ENCODE measurements at regions of chr6 and their contacts with region 1.

Region 1: DNA sequence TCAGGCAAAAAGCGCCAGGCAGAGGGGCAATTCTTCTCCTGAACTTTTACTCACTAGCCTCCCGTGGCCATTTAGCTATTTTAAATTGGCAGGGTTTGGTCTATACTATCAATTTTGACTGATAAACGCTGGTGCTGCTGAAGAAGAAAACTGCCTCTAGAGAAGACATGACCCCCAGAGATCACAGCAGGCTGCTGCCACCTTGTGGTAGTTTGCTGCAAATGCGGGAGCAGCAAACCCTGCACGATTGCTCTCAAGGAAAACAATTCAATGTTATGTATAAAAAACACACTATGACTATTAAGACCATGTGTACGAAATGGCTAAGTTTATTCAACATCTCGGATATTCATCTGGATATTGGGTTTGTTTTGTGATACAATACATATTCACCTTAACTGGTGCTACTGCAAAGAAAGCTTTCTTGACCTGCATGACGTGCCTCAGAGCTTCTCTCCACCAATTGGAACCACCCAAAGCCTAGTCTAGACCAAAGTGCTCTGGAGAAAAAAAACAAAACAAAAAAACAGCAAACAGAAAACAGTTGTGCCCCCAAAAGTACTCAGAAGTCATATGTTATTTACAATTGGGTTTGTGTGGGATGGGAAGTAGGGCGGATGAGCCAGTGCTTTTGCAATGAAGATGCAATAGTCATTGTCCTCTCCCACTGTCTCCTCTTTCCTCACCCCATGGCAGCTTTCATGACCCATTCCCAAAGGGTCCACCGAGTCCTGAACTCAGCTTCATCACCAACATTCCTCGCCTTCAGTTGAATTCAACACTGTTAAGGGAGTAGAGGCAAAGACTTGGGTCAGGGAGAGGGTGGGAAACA is 19.6 kb upstream of the IL17F start:
- DNase-seq: peak; percentile 63
- H3K4me3 Mint-ChIP-seq: no peak overlapping the region
- H3K27ac Mint-ChIP-seq: peak overlapping the region; percentile 47
- H3K4me1 Mint-ChIP-seq: peaks cover 7% of the 10 kb centered on the region
- H3K27me3 Mint-ChIP-seq: no peaks in the 10 kb centered on the region

Region 2: DNA sequence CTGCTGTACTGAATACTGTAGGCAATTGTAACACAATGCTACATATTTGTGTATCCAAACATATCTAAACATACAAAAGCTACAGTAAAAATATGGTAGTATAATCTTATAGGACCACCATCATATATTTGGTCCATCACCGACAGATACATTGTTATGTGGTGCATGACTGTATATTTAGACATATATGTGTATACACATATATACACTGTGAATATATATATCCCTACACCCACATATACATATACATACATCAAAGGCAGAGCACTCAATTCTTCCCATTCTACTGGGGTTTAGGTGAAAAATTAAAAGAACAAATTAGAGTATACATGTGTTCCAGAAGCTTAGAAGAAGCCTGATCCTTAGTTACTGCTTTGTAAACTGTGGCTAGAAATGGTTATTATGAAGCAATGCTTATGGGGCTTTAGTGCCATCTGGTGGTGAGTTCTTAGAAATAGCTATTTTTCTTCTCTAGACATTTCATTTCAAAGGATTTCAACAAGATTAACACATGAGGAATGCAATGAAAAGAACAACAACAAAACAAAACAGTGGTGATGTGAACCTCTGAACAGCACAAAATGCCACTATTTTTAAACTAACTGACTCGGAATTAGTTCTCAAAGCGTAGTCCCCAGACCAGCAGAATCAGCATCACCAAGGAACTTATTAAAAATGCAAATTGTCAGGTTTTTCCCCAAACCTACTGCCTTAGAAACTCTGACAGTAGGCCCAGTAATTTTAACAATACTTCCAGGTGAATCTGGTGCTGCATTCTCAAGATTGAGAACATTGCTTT is 214.5 kb before region 1 on chr6:
- intact Hi-C with region 1: loop called (anchors 1 kb)
- DNase-seq: no peak
- H3K4me3 Mint-ChIP-seq: no peak overlapping the region
- H3K27ac Mint-ChIP-seq: no peak overlapping the region
- H3K4me1 Mint-ChIP-seq: no peaks in the 10 kb centered on the region
- H3K27me3 Mint-ChIP-seq: peaks cover 8% of the 10 kb centered on the region

Region 3: DNA sequence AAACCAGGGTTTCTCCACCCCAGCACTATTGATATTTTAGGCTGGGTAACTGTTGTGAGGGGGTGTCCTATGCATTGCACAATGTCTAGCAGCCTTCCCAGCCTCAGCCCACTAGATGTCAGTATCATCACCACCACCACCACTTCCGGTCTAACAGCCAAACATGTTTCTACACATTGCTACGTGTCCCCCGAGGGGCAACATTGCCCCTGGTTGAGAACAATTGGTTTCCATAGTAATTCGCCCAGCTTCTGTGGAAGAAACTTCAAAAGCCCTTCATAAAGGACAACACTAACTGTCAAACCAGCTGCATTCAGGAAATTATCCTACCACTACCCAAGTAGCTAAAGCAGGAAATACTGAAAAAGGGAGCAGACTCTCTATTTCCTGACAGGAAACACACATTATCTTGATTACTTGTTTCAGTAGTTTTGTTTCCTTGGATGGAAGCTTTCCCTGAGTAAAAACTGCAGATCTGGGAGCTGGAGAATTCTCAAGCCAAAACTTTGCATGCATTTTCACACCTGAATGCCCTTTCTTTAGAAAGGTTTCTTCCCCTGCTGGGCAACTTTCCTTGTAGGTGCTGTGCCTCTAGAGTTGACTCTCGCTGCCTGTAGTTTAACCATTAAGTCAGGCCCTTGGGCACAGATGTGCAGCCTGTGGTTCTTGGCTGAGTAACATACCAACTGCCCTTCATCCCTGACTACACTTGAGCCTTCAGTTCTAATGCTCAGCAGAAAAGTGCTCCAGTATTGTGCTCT is 200.2 kb before region 1 on chr6:
- intact Hi-C with region 1: loop called (anchors 1 kb)
- DNase-seq: peak; percentile 37
- H3K4me3 Mint-ChIP-seq: no peak overlapping the region
- H3K27ac Mint-ChIP-seq: no peak overlapping the region
- H3K4me1 Mint-ChIP-seq: peaks cover 13% of the 10 kb centered on the region
- H3K27me3 Mint-ChIP-seq: peaks cover 13% of the 10 kb centered on the region

Region 4: GRCh38 chr6:52098634-52099185 is 165.2 kb before region 1 on chr6:
- intact Hi-C with region 1: loop called (anchors 1 kb)
- DNase-seq: no peak
- H3K4me3 Mint-ChIP-seq: no peak overlapping the region
- H3K27ac Mint-ChIP-seq: no peak overlapping the region
- H3K4me1 Mint-ChIP-seq: no peaks in the 10 kb centered on the region
- H3K27me3 Mint-ChIP-seq: peaks cover 4% of the 10 kb centered on the region

Region 5: GRCh38 chr6:52144201-52145076 is 119.5 kb before region 1 on chr6:
- intact Hi-C with region 1: no loop called
- DNase-seq: no peak
- H3K4me3 Mint-ChIP-seq: no peak overlapping the region
- H3K27ac Mint-ChIP-seq: no peak overlapping the region
- H3K4me1 Mint-ChIP-seq: no peaks in the 10 kb centered on the region
- H3K27me3 Mint-ChIP-seq: peaks cover 35% of the 10 kb centered on the region

Region 6: GRCh38 chr6:52210227-52210626 is 53.7 kb before region 1 on chr6:
- intact Hi-C with region 1: loop called (anchors 1 kb)
- DNase-seq: no peak
- H3K4me3 Mint-ChIP-seq: no peak overlapping the region
- H3K27ac Mint-ChIP-seq: no peak overlapping the region
- H3K4me1 Mint-ChIP-seq: no peaks in the 10 kb centered on the region
- H3K27me3 Mint-ChIP-seq: peaks cover 49% of the 10 kb centered on the region

Region 7: GRCh38 chr6:52253494-52253893 is 10.4 kb before region 1 on chr6:
- intact Hi-C with region 1: loop called (anchors 1 kb)
- DNase-seq: peak; percentile 19
- H3K4me3 Mint-ChIP-seq: no peak overlapping the region
- H3K27ac Mint-ChIP-seq: no peak overlapping the region
- H3K4me1 Mint-ChIP-seq: peaks cover 32% of the 10 kb centered on the region
- H3K27me3 Mint-ChIP-seq: peaks cover 54% of the 10 kb centered on the region

Region 8: GRCh38 chr6:52475307-52475706 is 211.4 kb after region 1 on chr6:
- intact Hi-C with region 1: no loop called
- DNase-seq: no peak
- H3K4me3 Mint-ChIP-seq: no peak overlapping the region
- H3K27ac Mint-ChIP-seq: no peak overlapping the region
- H3K4me1 Mint-ChIP-seq: no peaks in the 10 kb centered on the region
- H3K27me3 Mint-ChIP-seq: peaks cover 9% of the 10 kb centered on the region